A549 (cell line): ENCODE measurements at regions of chr9 and their contacts with region 1.

Region 1: DNA sequence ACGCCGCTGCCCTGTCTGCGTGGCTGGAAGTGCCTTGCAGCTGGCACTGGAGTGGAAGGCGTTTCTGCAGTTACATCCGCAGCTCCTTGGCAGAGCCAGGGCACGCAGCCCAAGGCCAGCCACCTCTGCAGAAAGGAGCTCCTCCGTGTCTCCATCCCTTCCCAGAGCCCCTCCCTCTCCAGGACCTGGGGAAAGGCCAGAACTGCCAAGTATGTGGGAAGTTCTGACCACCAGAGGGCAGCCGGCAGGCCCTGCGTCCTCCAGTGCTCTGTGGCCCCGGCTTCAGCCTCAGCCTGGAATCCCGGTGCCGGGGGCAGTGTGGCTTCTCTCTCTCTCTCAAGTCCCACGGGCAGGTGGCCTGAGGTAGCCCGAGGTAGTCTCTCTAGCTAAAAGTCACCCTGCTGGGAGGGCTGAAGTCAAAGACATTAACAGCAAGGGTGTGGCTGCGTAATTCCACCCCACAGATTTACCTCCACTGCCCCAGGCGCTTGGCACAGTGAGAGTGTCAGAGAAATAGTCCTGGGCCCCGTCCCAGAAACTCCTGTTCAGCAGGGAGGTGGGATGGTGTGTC is 101.7 kb upstream of the FCN2 start:
- DNase-seq: peak; percentile 64 to 65
- ATAC-seq: peak; percentile 79 to 93
- H3K4me3 ChIP-seq: no peak overlapping the region
- H3K27ac ChIP-seq: 0 out of 6 replicates have a peak overlapping the region, but pooled peaks of 1 of the 2 experiments have one; percentile 25
- H3K4me1 ChIP-seq: peaks cover 25% of the 10 kb centered on the region
- CTCF ChIP-seq: peak; percentile 70
- EP300 ChIP-seq: no peak
- POLR2A ChIP-seq: no peak
- RAD21 ChIP-seq: peak; percentile 58 to 62

Region 2: GRCh38 chr9:134689321-134690181 is 89.4 kb before region 1 on chr9:
- CTCF ChIA-PET with region 1: interaction called, 10 read pairs
- POLR2A ChIA-PET with region 1: no interaction called
- DNase-seq: peak; percentile 59 to 82
- ATAC-seq: peak; percentile 89 to 98
- H3K4me3 ChIP-seq: no peak overlapping the region
- H3K27ac ChIP-seq: peak overlapping the region; percentile 17 to 64; a peak in 3 of 6 replicates
- H3K4me1 ChIP-seq: peaks cover 10% of the 10 kb centered on the region
- CTCF ChIP-seq: peak; percentile 59
- EP300 ChIP-seq: no peak
- POLR2A ChIP-seq: no peak
- RAD21 ChIP-seq: peak; percentile 42 to 44

Region 3: GRCh38 chr9:134764473-134765269 is 14.3 kb before region 1 on chr9:
- CTCF ChIA-PET with region 1: interaction called, 16 read pairs
- POLR2A ChIA-PET with region 1: no interaction called
- DNase-seq: no peak
- ATAC-seq: no peak
- H3K4me3 ChIP-seq: no peak overlapping the region
- H3K27ac ChIP-seq: no peak overlapping the region
- H3K4me1 ChIP-seq: no peaks in the 10 kb centered on the region
- CTCF ChIP-seq: no peak
- EP300 ChIP-seq: no peak
- POLR2A ChIP-seq: no peak
- RAD21 ChIP-seq: no peak

Region 4: GRCh38 chr9:134789168-134789567 is 10.2 kb after region 1 on chr9:
- CTCF ChIA-PET with region 1: interaction called, 22 read pairs
- POLR2A ChIA-PET with region 1: no interaction called
- DNase-seq: no peak
- ATAC-seq: no peak
- H3K4me3 ChIP-seq: no peak overlapping the region
- H3K27ac ChIP-seq: no peak overlapping the region
- H3K4me1 ChIP-seq: no peaks in the 10 kb centered on the region
- CTCF ChIP-seq: no peak
- EP300 ChIP-seq: no peak
- POLR2A ChIP-seq: no peak
- RAD21 ChIP-seq: no peak

Region 5: DNA sequence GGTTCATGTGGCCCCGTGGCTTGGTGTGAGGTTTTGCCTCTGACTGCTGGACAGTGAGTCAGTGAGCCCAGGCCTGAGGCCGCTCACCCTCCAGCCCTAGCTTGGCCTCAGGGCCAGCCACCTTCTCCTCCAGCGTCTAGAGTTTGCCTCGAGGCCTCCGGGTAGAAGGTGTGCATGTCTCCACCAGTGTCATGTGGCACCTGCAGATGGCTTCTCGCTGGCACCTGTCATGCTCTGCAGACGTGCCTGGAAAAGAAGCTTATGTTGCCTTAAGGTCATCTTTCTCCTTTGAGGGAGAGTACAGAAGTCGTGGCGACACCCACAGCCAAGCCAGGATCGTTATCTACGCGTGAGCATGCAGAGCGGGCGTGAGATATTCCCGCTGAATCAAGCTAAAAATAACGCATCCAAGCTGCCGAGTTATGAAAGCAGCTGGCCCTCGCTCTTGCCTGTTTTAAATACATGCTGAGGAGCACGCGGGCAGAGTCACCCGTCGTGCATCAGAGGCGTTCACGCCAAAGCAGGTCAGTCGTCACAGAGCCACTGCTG is 21.9 kb after region 1 on chr9:
- CTCF ChIA-PET with region 1: interaction called, 12 read pairs
- POLR2A ChIA-PET with region 1: no interaction called
- DNase-seq: no peak
- ATAC-seq: no peak
- H3K4me3 ChIP-seq: no peak overlapping the region
- H3K27ac ChIP-seq: no peak overlapping the region
- H3K4me1 ChIP-seq: no peaks in the 10 kb centered on the region
- CTCF ChIP-seq: no peak
- EP300 ChIP-seq: no peak
- POLR2A ChIP-seq: no peak
- RAD21 ChIP-seq: no peak

Region 6: GRCh38 chr9:134807716-134808444 is 29.0 kb after region 1 on chr9:
- CTCF ChIA-PET with region 1: interaction called, 12 read pairs
- POLR2A ChIA-PET with region 1: no interaction called
- DNase-seq: peak in 1 of 2 experiments; percentile 27
- ATAC-seq: peak in 1 of 2 experiments; percentile 52; a peak in 2 of 6 replicates
- H3K4me3 ChIP-seq: no peak overlapping the region
- H3K27ac ChIP-seq: no peak overlapping the region
- H3K4me1 ChIP-seq: no peaks in the 10 kb centered on the region
- CTCF ChIP-seq: no peak
- EP300 ChIP-seq: no peak
- POLR2A ChIP-seq: no peak
- RAD21 ChIP-seq: no peak

Region 7: GRCh38 chr9:134847752-134848447 is 69.0 kb after region 1 on chr9:
- CTCF ChIA-PET with region 1: no interaction called
- POLR2A ChIA-PET with region 1: no interaction called
- DNase-seq: peak in 1 of 2 experiments; percentile 12
- ATAC-seq: peak; percentile 25 to 51; a peak in 4 of 6 replicates
- H3K4me3 ChIP-seq: no peak overlapping the region
- H3K27ac ChIP-seq: no peak overlapping the region
- H3K4me1 ChIP-seq: no peaks in the 10 kb centered on the region
- CTCF ChIP-seq: no peak
- EP300 ChIP-seq: no peak
- POLR2A ChIP-seq: no peak
- RAD21 ChIP-seq: no peak

Region 8: GRCh38 chr9:134858051-134858841 is 79.3 kb after region 1 on chr9:
- CTCF ChIA-PET with region 1: no interaction called
- POLR2A ChIA-PET with region 1: no interaction called
- DNase-seq: peak; percentile 25 to 30
- ATAC-seq: peak; percentile 66 to 73
- H3K4me3 ChIP-seq: no peak overlapping the region
- H3K27ac ChIP-seq: 0 out of 6 replicates have a peak overlapping the region, but pooled peaks of 1 of the 2 experiments have one; percentile 20
- H3K4me1 ChIP-seq: peaks cover 11% of the 10 kb centered on the region
- CTCF ChIP-seq: no peak
- EP300 ChIP-seq: no peak
- POLR2A ChIP-seq: no peak
- RAD21 ChIP-seq: peak in 1 of 2 experiments; percentile 3; a peak in 2 of 5 replicates